Activated CD8-positive, alpha-beta T cell treated with anti-CD3 and anti-CD28 coated beads, Interleukin-2, amount 10 ng/mL, durations not matched to agents 7 days and 5 days (primary cell): ENCODE measurements at regions of chr1 and their contacts with region 1.

Region 1: GRCh38 chr1:167059045-167059808 is 30.9 kb downstream of the GPA33 start:
- DNase-seq: peak; percentile 81
- ATAC-seq: peak; percentile 50
- H3K4me3 Mint-ChIP-seq: no peak overlapping the region
- H3K27ac Mint-ChIP-seq: peak overlapping the region; percentile 21
- H3K4me1 Mint-ChIP-seq: peaks cover 12% of the 10 kb centered on the region
- H3K27me3 Mint-ChIP-seq: peaks cover 3% of the 10 kb centered on the region

Region 2: GRCh38 chr1:166884040-166884642 is 175.1 kb before region 1 on chr1:
- CTCF ChIA-PET with region 1: interaction called, 137 read pairs
- POLR2A ChIA-PET with region 1: no interaction called
- DNase-seq: peak; percentile 60
- ATAC-seq: peak; percentile 79
- H3K4me3 Mint-ChIP-seq: peak overlapping the region; percentile 34
- H3K27ac Mint-ChIP-seq: no peak overlapping the region
- H3K4me1 Mint-ChIP-seq: peaks cover 23% of the 10 kb centered on the region
- H3K27me3 Mint-ChIP-seq: peaks cover 32% of the 10 kb centered on the region

Region 3: GRCh38 chr1:166939741-166940375 is 119.4 kb before region 1 on chr1:
- CTCF ChIA-PET with region 1: interaction called, 15 read pairs
- POLR2A ChIA-PET with region 1: no interaction called
- DNase-seq: no peak
- ATAC-seq: no peak
- H3K4me3 Mint-ChIP-seq: no peak overlapping the region
- H3K27ac Mint-ChIP-seq: no peak overlapping the region
- H3K4me1 Mint-ChIP-seq: peaks cover 22% of the 10 kb centered on the region
- H3K27me3 Mint-ChIP-seq: peaks cover 2% of the 10 kb centered on the region

Region 4: GRCh38 chr1:167022384-167022783 is 36.8 kb before region 1 on chr1:
- CTCF ChIA-PET with region 1: interaction called, 12 read pairs
- POLR2A ChIA-PET with region 1: no interaction called
- DNase-seq: no peak
- ATAC-seq: no peak
- H3K4me3 Mint-ChIP-seq: no peak overlapping the region
- H3K27ac Mint-ChIP-seq: no peak overlapping the region
- H3K4me1 Mint-ChIP-seq: no peaks in the 10 kb centered on the region
- H3K27me3 Mint-ChIP-seq: peaks cover 21% of the 10 kb centered on the region

Region 5: GRCh38 chr1:167109125-167109524 is 49.9 kb after region 1 on chr1:
- CTCF ChIA-PET with region 1: interaction called, 10 read pairs
- POLR2A ChIA-PET with region 1: no interaction called
- DNase-seq: no peak
- ATAC-seq: peak; percentile 53
- H3K4me3 Mint-ChIP-seq: no peak overlapping the region
- H3K27ac Mint-ChIP-seq: peak overlapping the region; percentile 62
- H3K4me1 Mint-ChIP-seq: peaks cover 48% of the 10 kb centered on the region
- H3K27me3 Mint-ChIP-seq: peaks cover 20% of the 10 kb centered on the region

Region 6: DNA sequence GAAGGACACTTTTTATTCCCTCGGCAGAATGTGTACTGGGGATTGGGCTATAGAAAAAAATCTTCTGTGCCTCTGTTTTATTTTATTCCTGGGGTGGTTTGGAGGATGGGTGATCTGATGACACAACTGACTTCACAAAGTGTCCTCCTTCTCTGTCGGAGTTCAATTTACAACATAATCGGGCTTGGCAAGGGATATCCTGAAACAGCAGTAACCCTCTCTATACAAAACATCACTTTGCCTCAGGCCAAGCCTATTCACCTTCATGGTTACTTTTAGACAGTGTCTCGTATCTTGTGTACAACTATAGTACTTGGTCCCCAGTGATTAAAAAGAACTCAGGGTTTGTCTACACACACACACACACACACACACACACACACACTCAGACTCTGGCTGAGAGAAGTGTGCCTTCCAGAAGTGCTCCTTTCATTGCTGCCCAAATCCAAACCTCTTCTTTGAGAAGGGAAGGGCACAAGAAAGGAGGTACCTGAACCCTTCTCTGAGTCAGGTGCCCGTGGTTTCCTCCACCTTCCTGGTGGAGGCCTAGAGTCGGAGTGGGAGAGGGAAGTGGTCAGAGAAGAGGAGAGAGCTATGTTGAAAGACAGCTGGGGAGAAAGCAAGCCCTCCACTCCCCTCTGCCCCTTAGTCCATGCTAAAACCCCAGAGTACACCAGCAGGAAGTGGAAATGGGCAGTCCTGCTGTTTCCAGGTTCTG is 99.0 kb after region 1 on chr1:
- CTCF ChIA-PET with region 1: no interaction called
- POLR2A ChIA-PET with region 1: no interaction called
- DNase-seq: no peak
- ATAC-seq: no peak
- H3K4me3 Mint-ChIP-seq: no peak overlapping the region
- H3K27ac Mint-ChIP-seq: no peak overlapping the region
- H3K4me1 Mint-ChIP-seq: peaks cover 7% of the 10 kb centered on the region
- H3K27me3 Mint-ChIP-seq: no peaks in the 10 kb centered on the region

Region 7: GRCh38 chr1:167220537-167221125 is 161.4 kb after region 1 on chr1 and contains the start of gene POU2F1:
- CTCF ChIA-PET with region 1: interaction called, 32 read pairs
- POLR2A ChIA-PET with region 1: interaction called, 7 read pairs
- DNase-seq: peak; percentile 99
- ATAC-seq: peak; percentile 87
- H3K4me3 Mint-ChIP-seq: peak within 1 kb of the TSS; percentile 91
- H3K27ac Mint-ChIP-seq: peak within 1 kb of the TSS; percentile 95
- H3K4me1 Mint-ChIP-seq: peaks cover 30% of the 10 kb centered on the region
- H3K27me3 Mint-ChIP-seq: no peaks in the 10 kb centered on the region
- total RNA-seq, gene POU2F1: 22.7 to 23.3 TPM

Region 8: DNA sequence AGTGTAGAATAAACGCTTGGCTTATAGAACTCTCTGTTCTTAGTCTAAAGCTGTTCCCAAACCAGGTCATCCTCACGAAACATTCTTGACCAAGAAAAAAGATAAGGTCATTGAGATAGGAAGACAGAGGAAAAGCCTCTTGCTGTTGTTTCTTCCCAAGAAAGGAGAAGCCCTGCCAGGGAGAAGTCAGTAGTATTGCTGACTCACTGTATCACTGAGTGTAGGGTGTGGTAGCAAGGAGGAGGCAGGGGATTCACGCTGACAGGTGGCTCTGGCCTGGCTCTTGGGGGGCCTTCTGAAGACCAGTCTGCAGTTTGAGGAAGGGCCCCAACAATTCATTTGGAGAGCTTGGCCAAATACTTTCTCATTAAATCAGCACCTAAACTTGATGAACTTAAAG is 361.3 kb after region 1 on chr1:
- CTCF ChIA-PET with region 1: no interaction called
- POLR2A ChIA-PET with region 1: no interaction called
- DNase-seq: no peak
- ATAC-seq: no peak
- H3K4me3 Mint-ChIP-seq: no peak overlapping the region
- H3K27ac Mint-ChIP-seq: no peak overlapping the region
- H3K4me1 Mint-ChIP-seq: peaks cover 10% of the 10 kb centered on the region
- H3K27me3 Mint-ChIP-seq: no peaks in the 10 kb centered on the region